CD4-positive, alpha-beta memory T cell (primary cell): ENCODE measurements at regions of chr6 and their contacts with region 1.

Region 1: DNA sequence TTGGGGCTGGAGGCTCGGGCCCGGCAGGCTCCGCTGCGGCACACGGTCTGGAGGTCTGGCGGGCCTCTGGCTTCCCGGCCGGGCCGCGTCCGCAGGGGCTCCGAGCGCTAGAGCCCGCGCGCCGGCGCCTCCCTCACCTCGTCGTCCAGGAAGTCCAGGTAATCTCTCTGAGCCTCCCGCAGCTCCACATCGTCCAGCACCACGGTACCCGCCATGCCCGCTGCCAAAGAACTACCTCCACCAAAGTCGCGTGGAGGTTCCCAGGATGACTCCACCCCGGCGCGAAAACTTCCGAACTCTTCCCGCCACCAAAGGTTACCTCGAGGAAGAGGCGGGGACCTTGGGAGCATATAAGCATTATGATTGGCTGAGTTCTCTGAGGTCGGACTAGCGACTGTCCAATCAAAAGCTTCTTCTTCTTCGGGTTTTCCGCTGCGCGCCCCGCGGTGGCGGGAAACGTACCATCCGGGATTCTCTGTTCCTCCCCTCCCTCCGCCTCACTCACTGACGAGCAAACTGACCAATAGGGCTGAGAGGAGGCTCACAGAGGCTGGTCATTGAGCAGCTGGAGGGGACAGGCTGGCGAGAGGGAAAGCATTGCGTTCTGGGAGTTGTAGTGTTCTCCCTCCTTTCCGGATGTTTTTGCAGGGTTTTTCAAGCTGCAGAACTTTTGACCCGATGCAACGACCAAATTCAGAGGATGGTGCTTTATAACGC is at the start of gene MCM3:
- DNase-seq: peak; percentile 96 to 99 (median 99)
- H3K4me3 ChIP-seq: peak within 1 kb of the TSS; percentile 74 to 77
- H3K4me3 Mint-ChIP-seq: peak within 1 kb of the TSS in 5 of 8 donors; percentile 60 to 80 (median 68)
- H3K27ac ChIP-seq: peak within 1 kb of the TSS; percentile 73
- H3K27ac Mint-ChIP-seq: peak within 1 kb of the TSS in 3 of 7 donors; percentile 18 to 89 (median 88)
- H3K4me1 ChIP-seq: peaks cover 47% of the 10 kb centered on the region
- H3K4me1 Mint-ChIP-seq: peaks cover 30 to 57% (median 36%) of the 10 kb centered on the region in 4 donors
- H3K27me3 ChIP-seq: no peaks in the 10 kb centered on the region
- H3K27me3 Mint-ChIP-seq: no peaks in the 10 kb centered on the region
- total RNA-seq, gene MCM3: 48.6 to 54.2 TPM

Region 2: GRCh38 chr6:52304983-52305390 is 20.4 kb after region 1 on chr6:
- CTCF ChIA-PET with region 1: interaction called, 62 read pairs
- POLR2A ChIA-PET with region 1: interaction called, 124 read pairs
- intact Hi-C with region 1: loop called (anchors 1 kb)
- DNase-seq: peak in 1 of 5 donors; percentile 22
- H3K4me3 ChIP-seq: peak overlapping the region in 1 of 2 donors; percentile 34
- H3K4me3 Mint-ChIP-seq: peak overlapping the region; percentile 73 to 92 (median 82)
- H3K27ac ChIP-seq: peak overlapping the region; percentile 59
- H3K27ac Mint-ChIP-seq: peak overlapping the region; percentile 88 to 96 (median 94)
- H3K4me1 ChIP-seq: peaks cover 73% of the 10 kb centered on the region
- H3K4me1 Mint-ChIP-seq: peaks cover 54 to 89% (median 71%) of the 10 kb centered on the region in 4 donors
- H3K27me3 ChIP-seq: no peaks in the 10 kb centered on the region
- H3K27me3 Mint-ChIP-seq: no peaks in the 10 kb centered on the region

Region 3: GRCh38 chr6:52361945-52362442 is 77.4 kb after region 1 on chr6 and contains the start of gene PAQR8:
- CTCF ChIA-PET with region 1: interaction called, 76 read pairs
- POLR2A ChIA-PET with region 1: interaction called, 165 read pairs
- intact Hi-C with region 1: loop called (anchors 1 kb)
- DNase-seq: peak; percentile 77 to 88 (median 85)
- H3K4me3 ChIP-seq: peak within 1 kb of the TSS; percentile 62 to 97
- H3K4me3 Mint-ChIP-seq: peak within 1 kb of the TSS; percentile 93 to 99 (median 98)
- H3K27ac ChIP-seq: peak within 1 kb of the TSS; percentile 90
- H3K27ac Mint-ChIP-seq: peak within 1 kb of the TSS; percentile 90 to 98 (median 98)
- H3K4me1 ChIP-seq: peaks cover 41% of the 10 kb centered on the region
- H3K4me1 Mint-ChIP-seq: peaks cover 28 to 53% (median 41%) of the 10 kb centered on the region in 4 donors
- H3K27me3 ChIP-seq: no peaks in the 10 kb centered on the region
- H3K27me3 Mint-ChIP-seq: no peaks in the 10 kb centered on the region
- total RNA-seq, gene PAQR8: 36.4 to 40.9 TPM

Region 4: DNA sequence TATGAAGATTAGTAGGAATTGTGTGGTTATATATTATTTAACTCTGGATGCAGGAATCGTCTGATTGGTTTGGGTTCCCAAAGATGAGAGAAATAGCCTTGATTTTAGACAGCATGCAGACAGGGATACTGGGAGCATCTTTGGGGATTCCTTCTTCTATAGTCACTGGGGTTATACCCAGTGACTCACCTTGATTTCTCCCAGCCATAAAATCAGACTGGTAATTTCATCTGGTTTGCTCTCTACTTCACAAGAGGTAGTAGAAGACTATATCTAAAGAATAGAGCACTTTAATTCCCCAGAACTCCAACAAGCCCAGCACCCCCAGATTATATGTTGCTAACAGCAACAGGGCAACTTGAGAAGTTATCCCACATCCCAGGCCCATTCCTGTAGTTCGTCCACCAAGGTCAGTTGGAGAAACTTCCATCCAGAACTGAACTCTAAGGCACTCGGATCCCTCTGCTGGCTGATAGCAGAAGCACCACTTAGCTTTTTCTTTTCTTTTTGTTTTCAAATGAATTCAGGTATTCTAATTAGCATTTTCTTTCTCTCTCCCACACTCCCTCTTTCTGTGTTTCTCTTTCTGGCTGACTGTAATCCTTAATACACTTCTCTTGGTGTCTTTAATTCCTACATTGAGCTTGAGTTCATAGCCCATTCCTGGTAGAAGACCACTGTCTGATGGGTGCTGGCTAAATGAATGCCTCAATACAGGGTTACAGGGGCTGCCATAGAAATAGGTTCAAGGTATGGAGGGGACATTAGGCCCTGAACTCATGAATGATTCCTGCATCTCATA is 115.1 kb after region 1 on chr6:
- CTCF ChIA-PET with region 1: interaction called, 287 read pairs
- POLR2A ChIA-PET with region 1: interaction called, 164 read pairs
- intact Hi-C with region 1: loop called (anchors 1 kb)
- DNase-seq: peak; percentile 36 to 53 (median 47)
- H3K4me3 ChIP-seq: no peak overlapping the region
- H3K4me3 Mint-ChIP-seq: peak overlapping the region in 7 of 8 donors; percentile 32 to 82 (median 63)
- H3K27ac ChIP-seq: peak overlapping the region; percentile 67
- H3K27ac Mint-ChIP-seq: peak overlapping the region; percentile 95 to 99 (median 96)
- H3K4me1 ChIP-seq: peaks cover 68% of the 10 kb centered on the region
- H3K4me1 Mint-ChIP-seq: peaks cover 51 to 84% (median 60%) of the 10 kb centered on the region in 4 donors
- H3K27me3 ChIP-seq: no peaks in the 10 kb centered on the region
- H3K27me3 Mint-ChIP-seq: no peaks in the 10 kb centered on the region

Region 5: GRCh38 chr6:52577022-52577777 is 292.6 kb after region 1 on chr6 and contains the start of gene TRAM2:
- CTCF ChIA-PET with region 1: interaction called, 13 read pairs
- POLR2A ChIA-PET with region 1: interaction called, 11 read pairs
- intact Hi-C with region 1: loop called (anchors 1 kb)
- DNase-seq: peak; percentile 73 to 83 (median 79)
- H3K4me3 ChIP-seq: peak within 1 kb of the TSS; percentile 19 to 81
- H3K4me3 Mint-ChIP-seq: peak within 1 kb of the TSS; percentile 80 to 95 (median 88)
- H3K27ac ChIP-seq: peak within 1 kb of the TSS; percentile 65
- H3K27ac Mint-ChIP-seq: peak within 1 kb of the TSS; percentile 88 to 95 (median 91)
- H3K4me1 ChIP-seq: peaks cover 46% of the 10 kb centered on the region
- H3K4me1 Mint-ChIP-seq: peaks cover 32 to 60% (median 38%) of the 10 kb centered on the region in 4 donors
- H3K27me3 ChIP-seq: no peaks in the 10 kb centered on the region
- H3K27me3 Mint-ChIP-seq: no peaks in the 10 kb centered on the region
- total RNA-seq, gene TRAM2: 10.7 to 11.3 TPM

Region 6: GRCh38 chr6:52995913-52996645 is 711.5 kb after region 1 on chr6:
- CTCF ChIA-PET with region 1: no interaction called
- POLR2A ChIA-PET with region 1: no interaction called
- intact Hi-C with region 1: loop called (anchors 1 kb)
- DNase-seq: peak in 4 of 5 donors; percentile 36 to 42 (median 39)
- H3K4me3 ChIP-seq: peak overlapping the region; percentile 4 to 59
- H3K4me3 Mint-ChIP-seq: peak overlapping the region; percentile 92 to 99 (median 94)
- H3K27ac ChIP-seq: no peak overlapping the region
- H3K27ac Mint-ChIP-seq: peak overlapping the region; percentile 95 to 100 (median 100)
- H3K4me1 ChIP-seq: peaks cover 22% of the 10 kb centered on the region
- H3K4me1 Mint-ChIP-seq: peaks cover 9 to 29% (median 20%) of the 10 kb centered on the region in 4 donors
- H3K27me3 ChIP-seq: no peaks in the 10 kb centered on the region
- H3K27me3 Mint-ChIP-seq: peaks cover 4 to 8% of the 10 kb centered on the region in 2 donors

Region 7: DNA sequence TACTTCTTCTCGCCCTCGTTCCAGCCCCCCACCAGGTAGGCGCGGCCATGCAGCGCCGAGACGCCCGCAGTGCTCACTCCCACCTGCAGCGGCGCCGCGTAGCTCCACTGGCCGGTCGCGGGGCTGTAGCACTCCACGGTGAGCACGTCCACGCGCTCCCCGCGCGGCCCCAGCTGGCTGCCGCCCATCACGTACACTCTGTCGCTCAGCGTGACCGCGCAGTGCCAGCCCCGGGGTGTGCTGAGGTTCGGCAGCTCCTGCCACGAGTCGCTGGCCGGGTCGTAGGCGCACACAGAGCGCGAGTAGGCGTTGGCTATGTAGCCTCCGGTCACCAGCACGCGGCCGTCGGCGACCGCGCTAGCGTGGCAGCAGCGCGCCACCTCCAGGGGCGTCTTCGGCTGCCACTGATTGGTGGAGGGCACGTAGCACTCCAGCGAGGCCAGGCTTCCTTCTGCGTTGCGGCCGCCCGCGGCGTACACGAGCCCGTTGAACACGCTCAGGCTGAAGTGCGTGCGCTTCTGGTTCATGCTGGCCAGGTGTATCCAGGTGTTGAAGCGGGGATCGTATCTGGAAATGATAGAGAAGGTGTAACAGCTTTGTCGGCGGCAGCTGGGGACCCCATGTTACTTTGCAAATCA is 1367.3 kb after region 1 on chr6:
- CTCF ChIA-PET with region 1: no interaction called
- POLR2A ChIA-PET with region 1: no interaction called
- intact Hi-C with region 1: loop called (anchors 1 kb)
- DNase-seq: peak; percentile 79 to 83 (median 82)
- H3K4me3 ChIP-seq: peak overlapping the region; percentile 64 to 89
- H3K4me3 Mint-ChIP-seq: peak overlapping the region; percentile 87 to 96 (median 93)
- H3K27ac ChIP-seq: peak overlapping the region; percentile 50
- H3K27ac Mint-ChIP-seq: peak overlapping the region; percentile 79 to 95 (median 94)
- H3K4me1 ChIP-seq: peaks cover 22% of the 10 kb centered on the region
- H3K4me1 Mint-ChIP-seq: peaks cover 16 to 47% (median 27%) of the 10 kb centered on the region in 4 donors
- H3K27me3 ChIP-seq: no peaks in the 10 kb centered on the region
- H3K27me3 Mint-ChIP-seq: no peaks in the 10 kb centered on the region